ENCODE measurements at regions of chr2 and their contacts with region 1.

Region 1: DNA sequence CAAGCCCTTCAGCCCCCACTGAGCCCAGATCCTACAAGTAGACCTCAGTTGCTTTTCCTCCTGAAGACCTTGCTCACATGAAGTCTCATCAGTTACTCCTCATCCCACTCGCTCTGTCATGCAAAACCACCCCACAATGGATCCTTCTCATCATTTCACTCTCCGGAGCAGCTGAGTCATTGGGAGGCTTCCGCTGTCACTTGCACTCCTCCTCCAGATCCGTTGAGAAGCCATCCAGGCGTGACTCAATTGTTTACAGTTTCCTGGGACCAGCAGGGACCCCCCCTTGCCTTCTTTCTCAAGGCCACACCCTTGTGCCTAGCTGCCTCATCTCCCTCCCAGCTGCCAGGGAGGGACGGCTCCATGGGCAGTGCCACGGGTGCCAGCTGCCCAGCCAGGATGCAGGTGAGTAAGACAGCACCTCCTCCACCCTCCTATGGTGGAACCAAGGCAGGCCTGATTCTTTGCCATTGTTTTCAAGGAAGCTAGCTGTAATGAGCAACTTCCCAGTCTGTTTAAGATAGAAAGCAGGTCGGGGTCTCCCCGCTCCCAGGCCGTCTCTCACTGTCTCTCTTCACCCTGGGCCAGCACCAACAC is 16.3 kb downstream of the GPR55 start:
- DNase-seq: peak; percentile 72
- H3K4me3 Mint-ChIP-seq: peak overlapping the region; percentile 46
- H3K27ac Mint-ChIP-seq: peak overlapping the region; percentile 87
- H3K4me1 Mint-ChIP-seq: peaks cover 40% of the 10 kb centered on the region
- H3K27me3 Mint-ChIP-seq: peaks cover 28% of the 10 kb centered on the region

Region 2: DNA sequence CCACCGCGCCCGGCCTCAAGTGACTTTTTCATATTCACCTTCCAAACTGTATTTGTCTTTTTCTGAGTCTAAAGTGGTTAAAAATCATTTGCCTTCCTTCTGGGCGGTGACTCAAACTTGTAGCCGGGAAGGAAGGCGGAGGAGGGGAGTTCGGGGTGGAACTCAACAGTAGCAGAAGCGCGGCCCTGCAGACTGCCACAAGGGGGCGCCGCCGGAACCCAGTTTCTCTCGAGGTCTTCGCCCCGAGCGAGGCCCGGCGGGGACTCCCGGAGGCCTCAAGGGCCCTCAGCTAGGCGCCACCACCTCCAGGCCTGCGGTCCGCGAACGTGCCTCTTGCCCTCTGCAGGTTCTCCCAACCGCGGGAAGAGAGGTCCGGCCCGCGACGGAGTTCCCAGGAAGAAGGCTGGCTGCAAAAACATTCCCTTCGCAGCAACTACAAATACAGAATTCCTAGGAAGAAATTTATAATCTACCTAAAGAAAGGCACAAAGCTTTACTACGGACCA is 60.8 kb before region 1 on chr2:
- intact Hi-C with region 1: loop called (anchors 2 kb)
- DNase-seq: peak; percentile 95
- H3K4me3 Mint-ChIP-seq: no peak overlapping the region
- H3K27ac Mint-ChIP-seq: peak overlapping the region; percentile 1
- H3K4me1 Mint-ChIP-seq: peaks cover 13% of the 10 kb centered on the region
- H3K27me3 Mint-ChIP-seq: peaks cover 66% of the 10 kb centered on the region

Region 3: GRCh38 chr2:230924470-230925341 is 16.0 kb after region 1 on chr2 and contains the start of gene GPR55:
- intact Hi-C with region 1: loop called (anchors 1 kb)
- DNase-seq: peak; percentile 76
- H3K4me3 Mint-ChIP-seq: peak within 1 kb of the TSS; percentile 66
- H3K27ac Mint-ChIP-seq: peak within 1 kb of the TSS; percentile 82
- H3K4me1 Mint-ChIP-seq: peaks cover 42% of the 10 kb centered on the region
- H3K27me3 Mint-ChIP-seq: peaks cover 24% of the 10 kb centered on the region
- total RNA-seq, gene GPR55: 0.23 and 0.38 TPM in 2 replicates

Region 4: GRCh38 chr2:230974096-230974913 is 65.6 kb after region 1 on chr2:
- intact Hi-C with region 1: loop called (anchors 1 kb)
- DNase-seq: peak; percentile 86
- H3K4me3 Mint-ChIP-seq: peak overlapping the region; percentile 24
- H3K27ac Mint-ChIP-seq: peak overlapping the region; percentile 61
- H3K4me1 Mint-ChIP-seq: peaks cover 33% of the 10 kb centered on the region
- H3K27me3 Mint-ChIP-seq: peaks cover 28% of the 10 kb centered on the region

Region 5: GRCh38 chr2:231056453-231057424 is 148.0 kb after region 1 on chr2 and contains the start of gene PSMD1:
- intact Hi-C with region 1: loop called (anchors 2 kb)
- DNase-seq: peak; percentile 98
- H3K4me3 Mint-ChIP-seq: peak within 1 kb of the TSS; percentile 95
- H3K27ac Mint-ChIP-seq: peak within 1 kb of the TSS; percentile 100
- H3K4me1 Mint-ChIP-seq: peaks cover 56% of the 10 kb centered on the region
- H3K27me3 Mint-ChIP-seq: peaks cover 10% of the 10 kb centered on the region
- total RNA-seq, gene PSMD1: 200 and 203 TPM in 2 replicates